Psoas muscle (tissue), 8 donors: ENCODE measurements at regions of chr14 and their contacts with region 1.

Region 1: DNA sequence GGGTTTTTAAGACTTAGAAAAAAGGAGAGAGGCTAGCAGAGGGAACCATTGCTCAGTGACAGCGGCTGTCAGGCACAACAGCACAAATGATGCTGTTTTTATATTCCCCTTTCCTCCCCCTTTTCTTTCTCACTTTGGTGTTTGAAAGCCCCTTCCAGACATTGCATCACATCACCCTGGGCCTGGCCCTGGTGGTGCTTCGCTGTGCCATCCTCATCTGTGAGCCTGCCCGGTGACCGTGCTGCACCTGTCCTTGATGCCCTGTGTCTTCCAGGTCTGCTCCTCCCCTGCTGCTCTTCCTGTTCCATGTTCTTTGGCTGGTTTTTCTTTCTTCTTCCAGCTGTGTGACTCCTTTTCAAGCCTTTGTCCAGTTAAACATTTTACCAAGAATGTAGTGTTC is 24.8 kb downstream of the KLC1 start:
- DNase-seq: no peak
- ATAC-seq: peak; percentile 54 to 71 (median 61)
- H3K4me3 ChIP-seq: no peak overlapping the region
- H3K27ac ChIP-seq: peak overlapping the region; percentile 59
- H3K4me1 ChIP-seq: peaks cover 43% of the 10 kb centered on the region
- H3K27me3 ChIP-seq: no peaks in the 10 kb centered on the region
- CTCF ChIP-seq: no peak

Region 2: DNA sequence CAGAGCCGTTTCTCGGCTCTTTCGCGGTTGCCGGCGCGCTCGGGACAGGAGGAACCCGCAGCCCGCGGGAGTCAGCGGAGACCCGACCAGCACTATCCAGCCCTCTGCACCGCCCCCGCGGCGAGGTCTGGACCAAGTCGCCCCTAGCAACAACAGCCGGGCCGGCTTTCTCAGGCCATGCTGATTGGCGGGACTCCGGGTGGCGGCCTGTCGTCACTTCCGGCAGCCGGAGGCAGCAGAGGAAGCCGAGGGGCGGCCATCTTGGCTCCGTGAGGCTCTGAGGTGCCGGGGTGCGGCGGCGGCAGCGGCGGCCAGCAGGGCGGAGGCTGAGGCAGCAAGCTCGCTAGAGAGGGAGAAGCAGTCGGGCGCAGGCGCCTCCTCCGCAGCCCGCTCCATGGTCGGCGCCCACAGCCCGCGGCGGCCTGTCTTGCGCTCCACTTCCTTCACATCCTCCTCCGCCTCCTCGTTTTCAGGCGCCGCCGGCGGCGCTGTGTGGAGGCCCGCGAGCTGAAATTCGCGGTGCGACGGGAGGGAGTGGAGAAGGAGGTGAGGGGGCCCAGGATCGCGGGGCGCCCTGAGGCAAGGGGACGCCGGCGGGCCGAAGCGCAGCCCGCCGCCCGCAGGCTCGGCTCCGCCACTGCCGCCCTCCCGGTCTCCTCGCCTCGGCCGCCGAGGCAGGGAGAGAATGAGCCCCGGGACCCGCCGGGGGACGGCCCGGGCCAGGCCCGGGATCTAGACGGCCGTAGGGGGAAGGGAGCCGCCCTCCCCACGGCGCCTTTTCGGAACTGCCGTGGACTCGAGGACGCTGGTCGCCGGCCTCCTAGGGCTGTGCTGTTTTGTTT is 268.4 kb before region 1 on chr14 and contains the start of gene MARK3:
- intact Hi-C with region 1: no loop called
- DNase-seq: peak; percentile 99
- ATAC-seq: peak; percentile 94 to 98 (median 96)
- H3K4me3 ChIP-seq: peak within 1 kb of the TSS; percentile 98
- H3K27ac ChIP-seq: peak within 1 kb of the TSS; percentile 99
- H3K4me1 ChIP-seq: peaks cover 20% of the 10 kb centered on the region
- H3K27me3 ChIP-seq: no peaks in the 10 kb centered on the region
- CTCF ChIP-seq: peak; percentile 30
- total RNA-seq, gene MARK3: 56.0 to 75.9 (median 66.7) TPM

Region 3: GRCh38 chr14:103688906-103689902 is 35.4 kb after region 1 on chr14:
- intact Hi-C with region 1: loop called in 1 of 2 experiments (anchors 5 kb)
- DNase-seq: no peak
- ATAC-seq: no peak
- H3K4me3 ChIP-seq: no peak overlapping the region
- H3K27ac ChIP-seq: no peak overlapping the region
- H3K4me1 ChIP-seq: peaks cover 28% of the 10 kb centered on the region
- H3K27me3 ChIP-seq: no peaks in the 10 kb centered on the region
- CTCF ChIP-seq: no peak